ENCODE measurements at regions of chr14 and their contacts with region 1.

Region 1: GRCh38 chr14:60648934-60649874 is at the start of gene SIX1:
- DNase-seq: peak; percentile 84

Region 2: DNA sequence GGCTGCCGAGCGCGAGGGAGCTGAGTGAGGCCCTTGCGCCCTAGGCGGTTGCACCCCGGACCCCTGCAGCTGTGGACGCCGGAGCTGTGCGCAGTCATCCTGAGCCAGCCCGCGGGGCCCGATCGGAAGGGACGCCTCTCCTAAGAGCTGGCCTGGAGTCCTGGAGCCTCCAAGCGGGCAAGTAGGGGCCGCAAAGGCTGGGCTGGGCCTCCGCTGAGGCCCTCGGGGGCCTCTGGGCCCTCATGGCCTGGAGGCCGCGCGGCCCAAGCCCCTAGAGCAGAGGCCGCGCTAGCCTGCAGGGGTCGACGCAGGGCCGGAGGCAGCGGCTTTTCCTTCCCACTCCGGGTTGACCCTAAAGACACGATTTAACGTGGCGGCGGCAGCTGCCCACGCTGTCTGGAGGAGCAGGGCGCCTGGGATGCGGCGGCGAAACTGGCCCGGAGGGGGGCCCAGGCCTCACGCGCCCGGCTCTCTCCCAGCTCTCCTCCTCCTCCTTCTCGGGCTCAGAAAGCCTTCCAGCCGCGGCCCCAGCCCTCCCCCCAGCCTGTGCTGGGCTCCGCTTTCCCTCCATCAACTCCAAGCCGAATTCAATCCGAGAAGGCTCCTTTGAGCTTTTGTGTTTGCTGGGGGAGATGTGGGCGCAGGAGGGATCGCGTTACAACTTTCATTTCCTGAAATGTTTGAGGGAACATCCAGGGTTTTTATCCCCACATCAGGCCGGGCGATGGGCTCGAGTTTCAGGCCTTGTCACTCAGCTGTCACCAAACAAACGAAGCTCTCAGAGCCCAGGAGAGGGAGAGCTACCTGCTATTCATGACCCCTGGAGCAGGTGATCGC is 11.5 kb before region 1 on chr14:
- CTCF ChIA-PET with region 1: interaction called, 4 read pairs
- POLR2A ChIA-PET with region 1: interaction called, 21 read pairs
- DNase-seq: no peak

Region 3: GRCh38 chr14:60724137-60724619 is 75.0 kb after region 1 on chr14 and contains the start of gene SIX4:
- CTCF ChIA-PET with region 1: interaction called, 3 read pairs
- POLR2A ChIA-PET with region 1: interaction called, 71 read pairs
- DNase-seq: peak; percentile 80

Region 4: GRCh38 chr14:61147831-61148549 is 498.8 kb after region 1 on chr14:
- CTCF ChIA-PET with region 1: no interaction called
- POLR2A ChIA-PET with region 1: no interaction called
- DNase-seq: no peak

Measured in HEK293T (cell line).